G401 (cell line): ENCODE measurements at regions of chr17 and their contacts with region 1.

Region 1: GRCh38 chr17:50904521-50905459 is 38.6 kb upstream of the TOB1 start:
- DNase-seq: peak; percentile 78

Region 2: GRCh38 chr17:50949989-50950881 is 45.4 kb after region 1 on chr17:
- in situ Hi-C with region 1: loop called (anchors 5 kb)
- DNase-seq: peak; percentile 72

Region 3: DNA sequence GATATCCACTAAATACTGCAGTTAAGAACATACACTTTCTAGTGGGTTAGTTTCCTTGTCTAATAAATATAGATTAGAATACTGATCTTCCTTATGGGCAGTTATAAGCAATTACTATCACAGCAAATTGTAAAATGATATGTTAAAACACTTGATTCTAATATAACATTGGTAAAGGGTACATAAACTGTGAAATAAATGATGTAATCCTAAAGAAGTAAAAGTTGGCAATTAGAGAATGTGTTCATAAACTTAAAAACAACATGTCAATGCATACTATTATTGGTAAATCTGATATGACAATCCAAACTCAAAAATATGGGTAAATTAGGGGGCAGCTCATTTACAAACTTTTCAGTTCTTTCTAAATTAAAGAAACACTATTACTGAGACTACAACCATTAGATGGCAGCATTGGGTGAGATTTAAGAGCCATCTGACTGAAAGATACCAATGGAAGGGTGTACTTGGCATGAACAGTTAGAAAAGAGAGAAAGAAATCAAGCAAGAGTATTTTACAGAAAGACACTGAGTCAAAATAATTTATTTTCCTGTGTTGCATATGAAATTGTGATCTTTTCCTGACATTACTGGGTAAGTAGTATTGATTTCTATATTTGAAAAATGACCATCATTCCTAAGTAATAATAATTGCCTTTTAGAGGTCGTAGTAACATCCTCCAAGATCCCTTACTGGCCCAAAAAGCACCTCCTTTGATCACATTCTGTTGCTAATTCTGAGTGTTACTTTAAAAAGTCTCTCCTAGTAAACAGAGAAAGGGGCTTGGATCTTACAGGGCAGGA is 96.2 kb after region 1 on chr17:
- in situ Hi-C with region 1: no loop called
- DNase-seq: peak; percentile 82

Region 4: DNA sequence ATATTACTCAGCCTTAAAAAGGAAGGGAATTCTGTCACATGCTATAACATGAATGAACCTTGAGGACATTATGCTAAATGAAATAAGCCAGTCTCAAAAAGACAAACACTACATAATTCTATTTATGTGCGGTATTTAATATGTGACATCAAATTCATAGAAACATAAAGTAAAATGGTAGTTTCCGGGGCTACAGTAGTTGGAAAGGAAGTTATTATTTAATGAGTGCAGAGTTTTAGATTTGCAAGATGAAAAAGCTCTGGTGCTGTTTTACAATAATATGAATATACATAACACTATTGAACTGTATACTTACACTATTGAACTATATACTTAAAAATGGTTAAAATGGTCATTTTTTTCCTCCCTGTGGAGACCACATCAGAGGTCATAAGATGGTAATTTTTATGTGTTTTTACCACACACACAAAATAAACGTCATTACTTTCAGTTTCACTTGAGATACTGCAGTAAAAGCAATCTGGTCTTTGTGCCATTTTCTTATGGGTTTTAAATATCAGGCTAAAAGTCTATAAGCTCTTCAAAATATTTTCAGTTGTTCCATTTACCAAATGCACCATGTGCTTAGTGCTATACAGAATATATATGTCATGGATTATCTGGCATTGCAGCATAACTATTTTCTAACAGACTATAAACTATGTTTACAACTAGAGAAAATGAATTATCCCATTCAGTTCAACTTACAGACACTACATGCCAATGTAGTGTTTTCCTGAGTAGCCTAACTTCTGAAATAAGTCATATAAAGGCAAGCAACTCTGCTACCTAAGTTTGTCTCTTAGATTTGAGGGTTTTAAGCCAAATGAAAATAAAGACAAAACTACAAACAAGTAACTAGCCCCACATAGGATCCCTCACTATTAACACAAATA is 125.0 kb after region 1 on chr17:
- in situ Hi-C with region 1: no loop called
- DNase-seq: no peak